Breast epithelium (tissue), 4 donors: ENCODE measurements at regions of chr2 and their contacts with region 1.

Region 1: GRCh38 chr2:214747992-214748391 is 61.5 kb downstream of the BARD1 start:
- DNase-seq: no peak
- H3K4me3 ChIP-seq: no peak overlapping the region
- H3K27ac ChIP-seq: no peak overlapping the region
- H3K4me1 ChIP-seq: no peaks in the 10 kb centered on the region
- H3K27me3 ChIP-seq: no peaks in the 10 kb centered on the region
- CTCF ChIP-seq: no peak
- POLR2A ChIP-seq: no peak

Region 2: DNA sequence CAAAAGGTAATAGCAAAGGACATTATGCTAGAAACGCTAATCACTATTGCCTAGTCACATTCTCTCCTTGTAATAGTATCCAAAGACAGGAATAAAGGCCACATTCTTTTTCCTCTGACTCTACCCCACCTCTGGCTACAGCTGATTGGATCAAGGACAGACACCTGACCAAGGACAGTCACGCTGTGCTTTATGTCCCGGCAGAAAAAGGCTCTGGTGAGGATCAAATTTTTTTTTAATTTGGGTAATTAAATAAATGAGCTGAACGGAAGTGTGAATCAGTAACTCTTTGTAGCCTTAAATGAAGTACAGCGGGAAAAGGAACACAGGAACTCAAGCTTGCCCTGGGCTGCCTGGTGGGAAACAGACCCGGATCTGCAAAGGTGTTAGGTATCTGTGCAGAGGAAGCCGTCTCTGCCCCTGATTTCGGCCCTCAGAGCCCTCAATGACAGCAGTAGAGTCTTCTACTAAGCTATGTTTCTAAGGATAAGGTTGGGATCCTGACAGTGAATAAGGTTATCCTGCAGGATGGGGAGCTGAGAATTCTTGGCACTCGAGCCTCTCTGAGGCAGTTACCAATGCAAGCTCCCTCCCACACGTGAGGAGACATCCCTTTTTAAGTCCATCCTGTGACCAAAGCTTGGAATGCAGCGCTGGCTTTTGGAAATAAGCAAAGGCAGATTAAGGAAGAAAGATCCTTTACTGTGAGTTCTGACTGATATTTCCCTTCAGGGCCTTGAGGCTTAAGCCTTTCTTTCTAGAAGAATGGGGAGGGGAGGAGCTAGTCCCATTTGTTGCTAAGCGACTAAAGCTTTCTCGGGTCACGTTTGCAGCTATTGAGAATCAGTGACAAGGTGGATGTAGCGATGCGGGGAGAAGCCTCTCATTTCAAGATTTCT is 1558.7 kb before region 1 on chr2:
- intact Hi-C with region 1: loop called (anchors 5 kb)
- DNase-seq: no peak
- H3K4me3 ChIP-seq: no peak overlapping the region
- H3K27ac ChIP-seq: no peak overlapping the region
- H3K4me1 ChIP-seq: no peaks in the 10 kb centered on the region
- H3K27me3 ChIP-seq: no peaks in the 10 kb centered on the region
- CTCF ChIP-seq: no peak
- POLR2A ChIP-seq: no peak

Region 3: GRCh38 chr2:214765180-214765579 is 17.2 kb after region 1 on chr2:
- intact Hi-C with region 1: loop called (anchors 2 kb)
- DNase-seq: no peak
- H3K4me3 ChIP-seq: no peak overlapping the region
- H3K27ac ChIP-seq: no peak overlapping the region
- H3K4me1 ChIP-seq: no peaks in the 10 kb centered on the region
- H3K27me3 ChIP-seq: no peaks in the 10 kb centered on the region
- CTCF ChIP-seq: no peak
- POLR2A ChIP-seq: no peak